ENCODE measurements at regions of chr19 and their contacts with region 1.

Region 1: DNA sequence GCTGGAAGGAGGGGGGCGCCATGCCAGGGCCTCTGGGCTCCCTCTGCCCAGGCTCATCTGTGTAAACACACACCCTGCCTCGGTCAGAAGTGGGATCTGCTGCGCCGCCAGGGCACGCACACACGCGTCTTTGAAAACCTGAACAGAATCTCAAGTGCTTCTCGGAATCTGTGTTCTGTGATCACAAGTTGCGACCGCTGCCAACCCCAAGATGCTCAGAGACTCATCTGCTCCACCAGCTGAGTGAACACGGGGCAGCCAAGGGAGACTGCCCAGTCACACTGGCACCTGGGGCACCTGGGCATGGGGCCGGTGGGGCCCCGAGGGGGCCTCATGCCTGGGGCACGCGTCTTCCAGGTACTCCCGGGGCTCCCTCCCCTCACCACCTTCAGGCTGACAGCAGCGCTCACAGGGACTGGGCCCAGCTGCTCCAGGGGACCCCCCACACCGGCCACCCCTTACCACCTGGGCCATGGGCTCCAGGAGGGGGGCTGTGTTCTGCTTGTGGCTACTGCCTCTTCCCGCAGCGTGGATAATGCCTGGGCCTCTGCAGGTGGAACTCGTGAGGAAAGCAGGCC is 59.0 kb downstream of the KLF2 start:
- DNase-seq: no peak
- H3K4me3 ChIP-seq: no peak overlapping the region
- H3K27ac ChIP-seq: peak overlapping the region; percentile 57 to 90 (median 86)
- H3K4me1 ChIP-seq: peaks cover 10 to 34% (median 13%) of the 10 kb centered on the region in 3 donors
- H3K27me3 ChIP-seq: no peaks in the 10 kb centered on the region
- CTCF ChIP-seq: peak in 2 of 6 experiments; percentile 2
- POLR2A ChIP-seq: no peak

Region 2: GRCh38 chr19:16247353-16248182 is 136.1 kb before region 1 on chr19:
- intact Hi-C with region 1: loop called (anchors 2 kb)
- DNase-seq: peak; percentile 25
- H3K4me3 ChIP-seq: no peak overlapping the region
- H3K27ac ChIP-seq: no peak overlapping the region
- H3K4me1 ChIP-seq: peaks cover 0 to 8% (median 0%) of the 10 kb centered on the region in 3 donors
- H3K27me3 ChIP-seq: no peaks in the 10 kb centered on the region
- CTCF ChIP-seq: peak; percentile 86 to 97 (median 96)
- POLR2A ChIP-seq: no peak